ENCODE measurements at regions of chr4 and their contacts with region 1.

Region 1: DNA sequence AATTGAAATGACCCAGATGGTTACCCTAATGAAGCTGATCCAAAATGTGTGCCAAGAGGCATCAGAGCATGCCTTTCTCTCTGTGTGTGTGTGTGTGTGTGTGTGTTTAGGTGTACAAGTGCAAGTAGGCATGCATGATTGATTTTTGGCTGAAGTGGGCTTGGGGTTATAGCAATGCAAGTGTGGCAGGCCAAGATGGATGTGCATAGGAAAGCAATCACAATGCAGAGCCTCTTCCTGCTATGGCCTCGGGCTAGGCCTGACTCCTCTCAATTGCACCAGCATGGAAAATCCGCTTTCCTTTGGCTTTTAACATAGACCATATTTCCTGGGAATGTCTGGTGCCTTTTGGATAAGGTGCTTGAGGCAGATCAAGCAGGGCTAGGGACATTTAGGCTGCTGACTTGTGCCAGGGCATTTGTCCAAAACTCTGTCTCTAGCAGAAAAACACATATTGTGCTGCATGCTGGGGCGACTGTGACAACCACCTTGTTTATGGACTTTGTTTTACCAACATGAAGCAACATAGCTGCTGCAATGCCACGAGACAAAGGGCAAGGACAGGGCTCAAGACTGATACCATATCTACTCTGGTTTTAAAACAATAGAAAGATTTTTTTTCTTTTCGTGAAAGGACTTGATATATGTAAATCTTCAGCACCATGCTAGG is 395.7 kb downstream of the RAPGEF2 start:
- DNase-seq: no peak
- H3K4me3 Mint-ChIP-seq: no peak overlapping the region
- H3K27ac Mint-ChIP-seq: no peak overlapping the region
- H3K4me1 Mint-ChIP-seq: no peaks in the 10 kb centered on the region
- H3K27me3 Mint-ChIP-seq: no peaks in the 10 kb centered on the region

Region 2: GRCh38 chr4:159191989-159192388 is 306.6 kb before region 1 on chr4:
- CTCF ChIA-PET with region 1: no interaction called
- POLR2A ChIA-PET with region 1: no interaction called
- intact Hi-C with region 1: no loop called
- DNase-seq: no peak
- H3K4me3 Mint-ChIP-seq: no peak overlapping the region
- H3K27ac Mint-ChIP-seq: no peak overlapping the region
- H3K4me1 Mint-ChIP-seq: no peaks in the 10 kb centered on the region
- H3K27me3 Mint-ChIP-seq: no peaks in the 10 kb centered on the region

Region 3: GRCh38 chr4:159487284-159487747 is 11.3 kb before region 1 on chr4:
- CTCF ChIA-PET with region 1: interaction called, 21 read pairs
- POLR2A ChIA-PET with region 1: no interaction called
- intact Hi-C with region 1: no loop called
- DNase-seq: peak; percentile 40
- H3K4me3 Mint-ChIP-seq: no peak overlapping the region
- H3K27ac Mint-ChIP-seq: no peak overlapping the region
- H3K4me1 Mint-ChIP-seq: no peaks in the 10 kb centered on the region
- H3K27me3 Mint-ChIP-seq: peaks cover 6% of the 10 kb centered on the region

Measured in activated CD4-positive, alpha-beta memory T cell treated with anti-CD3 and anti-CD28 coated beads for 36 hours (primary cell).